Cardiac septum (tissue), 1 donor: ENCODE measurements at regions of chr7 and their contacts with region 1.

Region 1: DNA sequence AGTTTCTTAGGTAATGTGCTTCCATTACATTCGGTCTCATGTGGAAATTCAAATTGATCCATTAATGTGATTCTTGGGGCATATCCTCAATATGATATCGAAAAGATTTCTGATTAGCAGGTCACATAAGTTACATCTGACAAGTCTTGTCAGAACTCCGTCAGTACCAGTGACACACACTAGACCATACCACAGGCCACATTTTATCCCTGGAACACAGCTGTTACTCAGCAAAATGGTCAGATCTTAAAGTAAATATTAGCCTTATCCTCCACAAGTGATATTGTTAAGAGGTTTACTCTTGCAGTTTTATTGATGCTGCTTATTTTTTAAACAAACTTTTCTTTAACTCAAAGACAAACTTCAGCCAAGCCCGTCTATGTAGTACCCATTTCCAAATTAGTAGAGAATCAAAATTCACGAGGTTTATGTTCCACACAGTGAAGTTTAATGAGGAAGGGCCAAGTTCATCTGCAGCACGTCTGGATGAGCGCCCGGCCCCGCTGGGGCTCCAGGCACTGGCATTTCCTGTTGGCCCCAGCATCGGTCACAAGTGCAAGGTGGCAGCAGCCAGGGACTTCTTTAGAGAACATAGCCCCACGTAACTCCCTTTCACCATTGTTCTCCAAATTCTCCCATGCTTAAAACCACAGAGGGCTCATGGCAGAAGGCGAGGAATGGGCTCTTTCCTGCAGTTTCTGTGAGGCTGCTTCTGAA is 132.2 kb downstream of the VIPR2 start:
- DNase-seq: peak; percentile 85

Region 2: GRCh38 chr7:159126311-159127260 is 114.1 kb after region 1 on chr7:
- intact Hi-C with region 1: no loop called
- DNase-seq: peak; percentile 24

Region 3: GRCh38 chr7:159143780-159144757 is 131.6 kb after region 1 on chr7:
- intact Hi-C with region 1: loop called (anchors 5 kb)
- DNase-seq: peak; percentile 74